Right ventricle myocardium superior (tissue), 1 donor: ENCODE measurements at regions of chr5 and their contacts with region 1.

Region 1: DNA sequence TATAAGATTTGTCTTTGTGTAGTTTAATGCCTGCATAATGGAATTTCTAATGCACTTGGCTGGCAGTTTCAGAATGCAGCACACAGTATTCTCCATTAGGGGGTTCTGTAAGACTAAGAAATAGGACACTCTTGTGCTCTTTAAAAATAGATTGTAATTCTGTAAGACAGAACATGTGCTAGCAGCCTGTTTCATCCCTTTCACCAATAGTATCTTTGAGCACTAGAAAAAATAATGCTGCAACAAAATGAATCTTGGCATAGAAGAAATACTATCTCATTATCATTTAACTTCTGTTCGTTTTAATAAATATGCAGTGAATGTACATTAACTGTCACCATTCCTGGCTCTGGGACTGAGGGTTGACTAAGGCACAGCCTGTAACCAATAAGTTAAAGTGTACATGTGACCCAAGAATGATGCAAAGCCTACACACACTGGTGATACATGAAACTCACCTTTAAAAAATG is 23.8 kb upstream of the ZNF622 start:
- DNase-seq: no peak
- ATAC-seq: peak; percentile 77

Region 2: GRCh38 chr5:16552666-16553343 is 63.4 kb after region 1 on chr5:
- intact Hi-C with region 1: loop called (anchors 5 kb)
- DNase-seq: peak; percentile 87
- ATAC-seq: peak; percentile 85

Region 3: DNA sequence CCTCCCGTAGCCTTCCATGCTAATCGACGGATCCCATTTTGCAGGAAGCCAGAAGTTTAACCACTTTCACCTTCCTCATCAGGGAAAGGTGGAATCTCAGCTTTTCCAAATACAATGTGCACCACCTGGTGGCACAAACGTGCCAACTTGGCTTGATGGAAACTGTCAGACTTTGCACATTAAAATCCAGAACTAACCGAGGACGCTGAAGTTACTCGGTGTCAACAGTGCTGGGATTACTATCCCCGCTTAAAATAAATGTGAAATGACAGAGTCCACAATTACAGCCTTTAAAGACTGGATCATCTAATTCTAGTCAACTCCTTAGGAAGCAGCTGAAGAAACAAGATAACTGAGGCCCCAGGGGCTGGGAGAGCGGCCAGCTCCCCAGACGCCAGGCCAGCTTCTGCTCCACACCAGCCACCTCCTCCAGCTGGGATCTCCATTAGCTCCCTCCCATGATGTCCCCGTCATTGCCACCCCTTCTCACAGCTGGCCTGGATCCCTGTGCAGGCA is 177.6 kb after region 1 on chr5:
- intact Hi-C with region 1: loop called (anchors 5 kb)
- DNase-seq: peak; percentile 73
- ATAC-seq: peak; percentile 74

Region 4: GRCh38 chr5:16776611-16777251 is 287.4 kb after region 1 on chr5:
- intact Hi-C with region 1: loop called (anchors 10 kb)
- DNase-seq: no peak
- ATAC-seq: peak; percentile 90